Calu3 (cell line): ENCODE measurements at regions of chr12 and their contacts with region 1.

Region 1: GRCh38 chr12:55681142-55682077 is 26.3 kb downstream of the ITGA7 start:
- DNase-seq: peak; percentile 87
- H3K4me3 Mint-ChIP-seq: peak overlapping the region; percentile 87
- H3K27ac Mint-ChIP-seq: peak overlapping the region; percentile 68
- H3K4me1 Mint-ChIP-seq: peaks cover 30% of the 10 kb centered on the region
- H3K27me3 Mint-ChIP-seq: no peaks in the 10 kb centered on the region
- CTCF ChIP-seq: peak; percentile 55

Region 2: DNA sequence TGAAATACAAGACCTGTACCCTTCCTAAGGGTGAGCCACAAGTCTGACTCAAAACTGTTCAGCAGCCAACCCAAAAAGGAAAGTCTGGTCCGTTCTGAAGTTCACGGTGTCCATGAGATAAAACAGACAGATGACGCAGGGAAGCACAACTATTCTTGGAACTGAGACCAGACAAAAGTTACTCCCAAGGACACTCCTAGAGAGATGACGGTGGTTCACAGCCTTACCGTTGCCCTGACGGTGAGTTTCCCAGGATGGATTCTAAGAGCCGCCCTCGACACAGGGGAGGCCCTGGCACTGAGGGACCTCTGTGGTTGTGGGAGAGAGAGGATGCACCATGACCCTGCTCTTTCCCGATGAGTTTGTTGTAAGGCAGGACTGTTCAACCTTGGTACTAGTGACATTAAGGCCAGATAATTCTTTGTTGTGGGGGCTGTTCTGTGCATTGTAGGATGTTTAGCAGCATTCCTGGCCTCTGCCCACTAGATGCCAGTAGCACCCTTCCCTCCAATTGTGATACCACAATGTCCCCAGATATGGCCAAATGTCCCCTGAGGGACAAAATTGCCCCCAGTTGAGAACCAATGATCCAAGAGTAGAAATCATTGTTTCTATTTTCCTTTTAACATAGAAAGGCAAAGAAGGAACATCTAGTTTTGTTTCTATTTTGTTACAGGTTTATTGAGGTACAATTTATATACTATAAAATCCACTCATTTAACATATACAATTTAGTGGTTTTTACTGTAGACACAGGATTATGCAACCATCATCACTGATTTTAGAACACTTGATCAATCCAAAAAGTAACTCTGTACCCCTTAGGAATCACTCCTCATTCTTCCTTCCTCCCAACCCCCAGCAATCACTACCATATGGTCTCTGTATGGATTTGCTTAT is 21.7 kb before region 1 on chr12:
- CTCF ChIA-PET with region 1: interaction called, 27 read pairs
- intact Hi-C with region 1: loop called (anchors 2 kb)
- DNase-seq: peak; percentile 58
- H3K4me3 Mint-ChIP-seq: no peak overlapping the region
- H3K27ac Mint-ChIP-seq: no peak overlapping the region
- H3K4me1 Mint-ChIP-seq: peaks cover 29% of the 10 kb centered on the region
- H3K27me3 Mint-ChIP-seq: peaks cover 4% of the 10 kb centered on the region
- CTCF ChIP-seq: peak; percentile 53

Region 3: DNA sequence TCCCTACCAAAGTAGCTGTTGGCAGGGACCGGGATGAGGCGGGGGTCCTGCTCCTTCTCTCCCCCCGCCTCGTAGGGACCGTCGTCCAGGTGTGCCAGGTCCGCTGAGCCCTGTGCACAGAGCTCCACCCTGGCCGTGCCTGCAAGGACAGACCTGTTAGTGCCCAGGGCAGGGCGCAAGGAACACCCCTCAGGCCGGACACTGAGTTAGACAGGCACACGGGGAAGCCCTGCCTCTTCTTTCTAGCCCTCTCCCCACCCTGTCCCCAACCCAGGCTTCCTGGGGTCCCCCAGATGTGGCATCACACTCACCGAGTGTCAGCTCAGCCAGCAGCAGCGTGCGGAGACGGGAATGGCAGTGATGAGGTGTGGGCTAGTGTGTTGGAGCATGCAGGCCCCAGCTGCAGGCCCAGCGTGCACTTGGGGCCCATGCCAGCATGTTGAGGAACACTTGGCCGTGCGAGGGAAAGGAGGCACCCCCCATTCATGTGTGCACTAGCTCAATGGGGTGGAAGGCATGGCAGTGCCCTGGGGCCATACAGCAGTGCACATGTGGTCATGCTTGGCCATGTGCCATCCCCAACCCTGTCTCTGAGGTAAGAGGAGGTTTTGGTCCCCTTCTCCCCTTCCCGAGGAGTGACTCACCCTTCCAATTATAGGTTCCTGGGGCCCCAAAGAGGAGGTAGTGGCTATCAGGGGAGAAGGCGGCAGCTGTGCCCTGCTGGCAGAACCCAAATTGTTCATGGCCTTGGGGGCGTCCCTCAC is 19.0 kb after region 1 on chr12:
- CTCF ChIA-PET with region 1: interaction called, 14 read pairs
- intact Hi-C with region 1: no loop called
- DNase-seq: no peak
- H3K4me3 Mint-ChIP-seq: no peak overlapping the region
- H3K27ac Mint-ChIP-seq: no peak overlapping the region
- H3K4me1 Mint-ChIP-seq: no peaks in the 10 kb centered on the region
- H3K27me3 Mint-ChIP-seq: peaks cover 63% of the 10 kb centered on the region
- CTCF ChIP-seq: no peak

Region 4: DNA sequence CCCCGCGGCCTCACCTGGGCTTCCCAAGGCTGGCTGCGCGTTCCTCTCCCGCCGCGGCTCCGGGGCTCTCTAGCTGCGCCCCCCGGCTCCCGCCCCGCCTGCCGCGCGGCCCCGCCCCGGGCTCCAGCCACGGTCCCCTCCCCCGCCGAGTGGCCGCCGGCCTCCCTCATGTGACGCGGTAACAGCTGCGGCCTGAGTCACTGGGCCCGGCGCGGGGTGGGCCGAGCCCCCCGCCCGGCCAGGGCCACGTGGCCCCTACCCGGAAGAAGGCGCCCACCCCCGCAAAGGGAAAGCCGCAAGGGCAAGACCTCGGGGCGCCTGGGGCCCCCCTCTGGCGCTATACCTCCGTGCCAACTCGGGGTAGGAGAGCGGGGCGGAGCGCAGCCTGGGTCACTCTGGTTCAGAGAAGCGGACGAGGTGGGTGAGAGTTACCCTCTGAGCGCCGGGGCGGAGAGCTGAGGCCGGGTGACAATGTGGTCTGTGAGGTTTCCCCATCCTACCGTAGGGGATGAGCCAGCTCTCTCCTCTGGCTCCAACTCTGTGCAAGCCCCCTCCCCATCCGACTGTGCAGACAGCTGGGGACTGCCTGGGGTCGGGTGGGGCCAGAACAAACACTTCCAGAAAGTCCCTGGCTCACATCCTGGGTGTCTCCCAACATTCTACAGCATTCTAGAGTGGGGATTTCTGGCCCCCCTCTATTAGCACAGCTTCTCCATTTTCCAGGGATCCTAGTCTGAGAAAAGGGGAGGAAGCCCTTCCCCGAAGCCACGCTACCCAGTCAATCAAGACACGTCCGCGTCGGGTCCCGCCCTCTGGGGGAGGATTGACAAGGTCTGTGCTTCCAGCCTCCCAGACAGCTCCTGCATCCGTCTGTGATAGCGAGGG is 47.8 kb after region 1 on chr12 and contains the start of gene CD63:
- CTCF ChIA-PET with region 1: interaction called, 17 read pairs
- intact Hi-C with region 1: no loop called
- DNase-seq: peak; percentile 93
- H3K4me3 Mint-ChIP-seq: peak within 1 kb of the TSS; percentile 80
- H3K27ac Mint-ChIP-seq: peak within 1 kb of the TSS; percentile 93
- H3K4me1 Mint-ChIP-seq: peaks cover 35% of the 10 kb centered on the region
- H3K27me3 Mint-ChIP-seq: no peaks in the 10 kb centered on the region
- CTCF ChIP-seq: no peak
- total RNA-seq, gene CD63: 880 and 991 TPM in 2 replicates